ENCODE measurements at regions of chr3 and their contacts with region 1.

Region 1: GRCh38 chr3:42101048-42101447 is 9.9 kb downstream of the TRAK1 start:
- DNase-seq: peak; percentile 84
- ATAC-seq: peak; percentile 79

Region 2: GRCh38 chr3:41893977-41894376 is 207.1 kb before region 1 on chr3:
- intact Hi-C with region 1: loop called (anchors 1 kb)
- DNase-seq: no peak
- ATAC-seq: no peak

Region 3: GRCh38 chr3:41961750-41962679 is 139.0 kb before region 1 on chr3 and contains the start of gene ULK4:
- intact Hi-C with region 1: loop called (anchors 5 kb)
- DNase-seq: peak; percentile 98
- ATAC-seq: peak; percentile 98
- total RNA-seq, gene ULK4: 4.6 TPM

Region 4: GRCh38 chr3:42061713-42062408 is 39.2 kb before region 1 on chr3:
- intact Hi-C with region 1: loop called (anchors 5 kb)
- DNase-seq: peak; percentile 86
- ATAC-seq: peak; percentile 94

Measured in Right ventricle myocardium inferior (tissue), 1 donor.